Pancreas (tissue), 10 donors: ENCODE measurements at regions of chr1 and their contacts with region 1.

Region 1: DNA sequence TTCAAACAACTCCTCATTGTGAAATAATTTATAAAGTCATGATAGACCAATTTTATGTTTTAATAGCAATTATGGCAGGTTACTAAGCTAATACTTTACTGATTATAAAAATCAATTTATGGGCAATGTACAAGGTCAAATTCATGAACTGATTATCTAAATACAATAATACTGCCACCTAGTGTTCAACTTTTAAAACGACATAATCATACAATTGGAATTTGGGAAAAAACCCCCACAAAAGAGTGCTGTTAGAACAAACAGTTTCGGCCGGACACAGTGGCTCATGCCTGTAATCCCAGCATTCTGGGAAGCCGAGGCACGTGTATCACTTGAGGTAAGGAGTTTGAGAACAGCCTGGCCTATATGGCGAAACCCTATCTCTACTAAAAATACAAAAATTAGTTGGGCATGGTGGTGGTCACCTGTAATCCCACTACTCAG is 14.0 kb downstream of the GTF2B start:
- DNase-seq: no peak
- ATAC-seq: peak; percentile 41 to 75 (median 63)
- H3K4me3 ChIP-seq: no peak overlapping the region
- H3K27ac ChIP-seq: peak overlapping the region in 1 of 4 donors; percentile 17
- H3K4me1 ChIP-seq: peaks cover 9 to 27% (median 16%) of the 10 kb centered on the region in 3 donors
- H3K27me3 ChIP-seq: no peaks in the 10 kb centered on the region
- CTCF ChIP-seq: peak in 2 of 4 donors; percentile 38 to 59

Region 2: DNA sequence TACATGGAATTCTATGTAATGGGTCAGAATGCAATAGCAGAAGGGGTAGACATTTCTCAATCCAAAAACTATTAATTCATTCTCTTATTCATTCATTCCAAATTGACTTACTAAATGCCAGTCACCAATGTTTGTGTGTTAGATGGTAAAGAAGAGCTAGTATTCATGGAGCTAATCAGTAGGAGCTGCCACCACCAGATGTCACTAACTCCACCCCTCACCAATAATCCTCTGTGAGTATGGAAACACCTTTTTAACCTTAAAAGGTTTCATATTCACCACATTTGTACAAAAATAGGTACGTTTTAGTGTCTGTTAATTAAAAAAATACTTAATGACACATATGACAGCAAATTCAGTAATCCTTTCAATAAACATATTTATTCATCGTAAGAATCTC is 325.2 kb before region 1 on chr1:
- intact Hi-C with region 1: no loop called
- DNase-seq: no peak
- ATAC-seq: no peak
- H3K4me3 ChIP-seq: no peak overlapping the region
- H3K27ac ChIP-seq: no peak overlapping the region
- H3K4me1 ChIP-seq: no peaks in the 10 kb centered on the region
- H3K27me3 ChIP-seq: no peaks in the 10 kb centered on the region
- CTCF ChIP-seq: no peak

Region 3: GRCh38 chr1:88655685-88656299 is 221.6 kb before region 1 on chr1:
- intact Hi-C with region 1: loop called in 1 of 3 experiments (anchors 5 kb)
- DNase-seq: no peak
- ATAC-seq: peak in 2 of 4 donors; percentile 42 to 53
- H3K4me3 ChIP-seq: no peak overlapping the region
- H3K27ac ChIP-seq: no peak overlapping the region
- H3K4me1 ChIP-seq: no peaks in the 10 kb centered on the region
- H3K27me3 ChIP-seq: no peaks in the 10 kb centered on the region
- CTCF ChIP-seq: peak; percentile 26 to 66 (median 49)

Region 4: DNA sequence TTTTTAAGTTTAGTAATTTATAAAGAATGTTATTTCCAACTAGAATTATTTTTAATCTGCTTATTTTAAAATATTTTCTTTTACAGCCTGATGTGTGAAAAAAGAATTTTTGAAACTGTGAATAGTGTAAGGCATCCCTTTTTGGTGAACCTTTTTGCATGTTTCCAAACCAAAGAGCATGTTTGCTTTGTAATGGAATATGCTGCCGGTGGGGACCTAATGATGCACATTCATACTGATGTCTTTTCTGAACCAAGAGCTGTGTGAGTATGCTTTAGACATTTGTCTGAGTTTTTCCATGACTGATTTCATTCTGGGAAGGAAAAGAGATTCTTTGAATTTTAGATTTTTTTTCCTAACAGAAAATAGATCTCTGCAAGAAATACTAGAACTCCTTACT is 63.9 kb before region 1 on chr1:
- intact Hi-C with region 1: no loop called
- DNase-seq: no peak
- ATAC-seq: no peak
- H3K4me3 ChIP-seq: no peak overlapping the region
- H3K27ac ChIP-seq: no peak overlapping the region
- H3K4me1 ChIP-seq: no peaks in the 10 kb centered on the region
- H3K27me3 ChIP-seq: no peaks in the 10 kb centered on the region
- CTCF ChIP-seq: no peak

Region 5: GRCh38 chr1:89211035-89211634 is 333.7 kb after region 1 on chr1:
- intact Hi-C with region 1: no loop called
- DNase-seq: no peak
- ATAC-seq: no peak
- H3K4me3 ChIP-seq: no peak overlapping the region
- H3K27ac ChIP-seq: no peak overlapping the region
- H3K4me1 ChIP-seq: no peaks in the 10 kb centered on the region
- H3K27me3 ChIP-seq: no peaks in the 10 kb centered on the region
- CTCF ChIP-seq: no peak